HepG2 (cell line): ENCODE measurements at regions of chr16 and their contacts with region 1.

Region 1: GRCh38 chr16:3690470-3690928 is 26.8 kb downstream of the TRAP1 start:
- DNase-seq: peak; percentile 66
- ATAC-seq: peak; percentile 94
- H3K4me3 ChIP-seq: no peak overlapping the region
- H3K27ac ChIP-seq: no peak overlapping the region
- H3K4me1 ChIP-seq: peaks cover 33% of the 10 kb centered on the region
- H3K27me3 ChIP-seq: no peaks in the 10 kb centered on the region
- CTCF ChIP-seq: peak; percentile 93
- EP300 ChIP-seq: no peak
- POLR2A ChIP-seq: no peak
- RAD21 ChIP-seq: peak; percentile 90

Region 2: GRCh38 chr16:3717235-3718018 is 26.9 kb after region 1 on chr16 and contains the start of gene TRAP1:
- CTCF ChIA-PET with region 1: no interaction called
- POLR2A ChIA-PET with region 1: interaction called, 144 read pairs
- in situ Hi-C with region 1: no loop called
- intact Hi-C with region 1: loop called (anchors 2 kb)
- DNase-seq: peak; percentile 50
- ATAC-seq: peak; percentile 76
- H3K4me3 ChIP-seq: peak within 1 kb of the TSS; percentile 77 to 98 (median 93)
- H3K27ac ChIP-seq: peak within 1 kb of the TSS; percentile 73
- H3K4me1 ChIP-seq: peaks cover 58% of the 10 kb centered on the region
- H3K27me3 ChIP-seq: peaks cover 0 to 2% of the 10 kb centered on the region in 2 experiments; a peak in 1 of 5 replicates
- CTCF ChIP-seq: peak; percentile 8; the same call in 1 of the 2 replicates
- EP300 ChIP-seq: no peak
- POLR2A ChIP-seq: peak; percentile 78 to 92
- RAD21 ChIP-seq: peak; percentile 34; the same call in 1 of the 2 replicates
- total RNA-seq, gene TRAP1: 112 and 127 TPM in 2 replicates

Region 3: DNA sequence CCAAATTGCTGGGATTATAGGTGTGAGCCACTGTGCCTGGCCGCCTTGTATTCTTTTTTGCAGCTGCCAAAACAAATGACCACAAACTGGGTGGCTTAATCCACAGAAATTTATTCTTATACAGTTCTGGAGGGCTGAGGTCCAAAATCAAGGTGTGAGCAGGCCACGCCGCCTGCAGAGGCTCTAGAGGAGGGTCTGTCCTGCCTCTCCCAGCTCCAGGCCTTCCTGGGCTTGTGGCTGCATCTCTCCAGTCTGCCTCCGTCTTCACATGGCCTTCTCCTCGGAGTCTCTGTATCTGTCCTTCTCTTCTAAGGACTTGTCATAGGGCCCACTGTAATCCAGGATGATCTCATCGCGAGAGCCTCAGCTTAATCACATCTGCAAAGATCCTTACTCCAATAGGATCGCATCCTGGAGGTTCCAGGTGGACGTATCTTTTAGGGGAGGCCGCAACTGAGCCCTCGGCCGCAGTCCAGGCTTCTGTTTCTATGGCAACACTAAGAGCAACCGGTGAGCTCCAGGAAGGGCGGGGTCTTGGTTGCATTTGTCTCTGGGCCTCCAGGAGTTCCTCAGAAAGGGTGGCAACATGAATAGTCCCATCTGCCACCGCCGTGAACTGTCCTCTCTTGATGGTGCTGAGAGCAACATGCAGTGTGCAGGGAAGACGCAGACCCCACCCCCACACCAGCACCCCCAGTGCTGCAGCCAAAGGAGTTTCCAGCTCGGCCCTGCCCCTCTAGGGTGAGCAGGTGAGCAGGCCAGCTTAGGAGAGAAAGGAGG is 219.5 kb after region 1 on chr16:
- CTCF ChIA-PET with region 1: interaction called, 7 read pairs
- POLR2A ChIA-PET with region 1: no interaction called
- in situ Hi-C with region 1: no loop called
- intact Hi-C with region 1: loop called (anchors 2 kb)
- DNase-seq: no peak
- ATAC-seq: no peak
- H3K4me3 ChIP-seq: no peak overlapping the region
- H3K27ac ChIP-seq: no peak overlapping the region
- H3K4me1 ChIP-seq: peaks cover 7% of the 10 kb centered on the region; the same call in 1 of the 2 replicates
- H3K27me3 ChIP-seq: peaks cover 2 to 7% of the 10 kb centered on the region in 2 experiments; a peak in 3 of 5 replicates
- CTCF ChIP-seq: no peak
- EP300 ChIP-seq: no peak
- POLR2A ChIP-seq: no peak
- RAD21 ChIP-seq: no peak